ENCODE measurements at regions of chr20 and their contacts with region 1.

Region 1: GRCh38 chr20:38434743-38435554 is at the start of gene SNHG17:
- DNase-seq: peak; percentile 88
- H3K4me3 ChIP-seq: peak within 1 kb of the TSS; percentile 84 to 91
- H3K27ac ChIP-seq: peak within 1 kb of the TSS; percentile 84
- H3K4me1 ChIP-seq: peaks cover 7 to 20% of the 10 kb centered on the region in 2 experiments; a peak in 3 of 4 replicates
- H3K27me3 ChIP-seq: no peaks in the 10 kb centered on the region
- CTCF ChIP-seq: peak; percentile 99
- EP300 ChIP-seq: peak in 1 of 2 experiments; percentile 54; a peak in 1 of 4 replicates
- RAD21 ChIP-seq: peak; percentile 37; the same call in 1 of the 2 replicates
- polyA plus RNA-seq, gene SNHG17: 34.9 and 40.3 TPM in 2 replicates

Region 2: GRCh38 chr20:38094373-38094891 is 340.5 kb before region 1 on chr20:
- CTCF ChIA-PET with region 1: no interaction called
- POLR2A ChIA-PET with region 1: no interaction called
- DNase-seq: no peak
- H3K4me3 ChIP-seq: no peak overlapping the region
- H3K27ac ChIP-seq: peak overlapping the region; percentile 69 to 75
- H3K4me1 ChIP-seq: peaks cover 16 to 38% of the 10 kb centered on the region in 2 experiments
- H3K27me3 ChIP-seq: no peaks in the 10 kb centered on the region
- CTCF ChIP-seq: no peak
- EP300 ChIP-seq: peak in 1 of 2 experiments; percentile 27; a peak in 1 of 4 replicates
- RAD21 ChIP-seq: no peak

Region 3: DNA sequence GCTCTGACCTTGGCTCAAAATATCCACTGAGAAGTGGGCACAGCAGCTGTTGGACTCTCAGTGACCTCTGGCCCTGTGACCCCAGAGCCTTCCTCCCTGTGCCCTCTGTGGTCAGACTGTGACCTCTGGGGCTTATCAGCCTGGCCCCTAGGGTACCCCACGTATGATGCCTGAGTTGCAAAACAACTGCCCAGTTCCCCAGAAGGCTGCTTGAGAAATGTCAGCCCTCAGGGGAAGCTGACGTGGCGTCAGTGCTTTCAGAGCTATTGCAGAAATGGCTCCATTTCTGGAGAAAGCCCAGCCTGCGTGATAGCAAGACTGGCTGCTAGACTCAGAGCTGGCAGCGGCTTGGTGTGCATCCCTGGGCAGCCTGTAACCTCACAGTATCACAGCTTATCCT is 238.4 kb before region 1 on chr20:
- CTCF ChIA-PET with region 1: no interaction called
- POLR2A ChIA-PET with region 1: no interaction called
- DNase-seq: no peak
- H3K4me3 ChIP-seq: no peak overlapping the region
- H3K27ac ChIP-seq: no peak overlapping the region
- H3K4me1 ChIP-seq: peaks cover 0 to 6% of the 10 kb centered on the region in 2 experiments; a peak in 1 of 4 replicates
- H3K27me3 ChIP-seq: no peaks in the 10 kb centered on the region
- CTCF ChIP-seq: no peak
- EP300 ChIP-seq: no peak
- RAD21 ChIP-seq: no peak

Region 4: GRCh38 chr20:38260378-38261053 is 174.4 kb before region 1 on chr20 and contains the start of gene KIAA1755:
- CTCF ChIA-PET with region 1: no interaction called
- POLR2A ChIA-PET with region 1: no interaction called
- DNase-seq: peak; percentile 83
- H3K4me3 ChIP-seq: peak within 1 kb of the TSS; percentile 37 to 57
- H3K27ac ChIP-seq: peak within 1 kb of the TSS in 1 of 2 experiments; percentile 53; a peak in 2 of 4 replicates
- H3K4me1 ChIP-seq: peaks cover 0 to 7% of the 10 kb centered on the region in 2 experiments; a peak in 1 of 4 replicates
- H3K27me3 ChIP-seq: no peaks in the 10 kb centered on the region
- CTCF ChIP-seq: no peak
- EP300 ChIP-seq: no peak
- RAD21 ChIP-seq: no peak
- polyA plus RNA-seq, gene KIAA1755: 0.44 and 0.54 TPM in 2 replicates

Region 5: GRCh38 chr20:38418509-38419204 is 16.3 kb before region 1 on chr20:
- CTCF ChIA-PET with region 1: interaction called, 31 read pairs
- POLR2A ChIA-PET with region 1: interaction called, 7 read pairs
- DNase-seq: no peak
- H3K4me3 ChIP-seq: no peak overlapping the region
- H3K27ac ChIP-seq: peak overlapping the region in 1 of 2 experiments; percentile 12; a peak in 2 of 4 replicates
- H3K4me1 ChIP-seq: peaks cover 0 to 6% of the 10 kb centered on the region in 2 experiments; a peak in 1 of 4 replicates
- H3K27me3 ChIP-seq: no peaks in the 10 kb centered on the region
- CTCF ChIP-seq: no peak
- EP300 ChIP-seq: no peak
- RAD21 ChIP-seq: no peak

Region 6: GRCh38 chr20:38446441-38447209 is 11.7 kb after region 1 on chr20:
- CTCF ChIA-PET with region 1: interaction called, 75 read pairs
- POLR2A ChIA-PET with region 1: interaction called, 83 read pairs
- DNase-seq: peak; percentile 94
- H3K4me3 ChIP-seq: peak overlapping the region; percentile 87 to 88
- H3K27ac ChIP-seq: peak overlapping the region; percentile 68 to 79
- H3K4me1 ChIP-seq: peaks cover 10 to 13% of the 10 kb centered on the region in 2 experiments; a peak in 1 of 4 replicates
- H3K27me3 ChIP-seq: no peaks in the 10 kb centered on the region
- CTCF ChIP-seq: peak; percentile 90
- EP300 ChIP-seq: peak in 1 of 2 experiments; percentile 34; a peak in 1 of 4 replicates
- RAD21 ChIP-seq: peak; percentile 53

Region 7: DNA sequence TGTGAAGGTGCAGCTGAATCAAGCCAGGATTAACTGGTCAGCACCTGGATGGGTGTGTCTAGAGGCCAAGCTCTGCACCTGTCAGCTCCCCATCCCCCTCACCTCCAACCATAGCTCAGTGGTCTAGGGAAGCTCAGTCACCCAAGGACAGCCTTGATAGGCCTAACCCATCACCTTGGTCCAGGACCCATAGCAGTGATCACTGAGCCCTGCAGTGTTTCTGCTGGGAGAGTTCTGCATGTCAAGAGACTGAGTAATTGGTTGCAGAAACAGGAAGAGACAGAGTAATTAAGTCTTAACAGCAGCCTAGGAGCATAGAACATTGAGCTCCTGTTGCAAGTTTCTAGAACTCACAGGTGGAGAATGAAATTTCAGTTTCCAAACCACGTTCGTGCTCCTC is 19.0 kb after region 1 on chr20:
- CTCF ChIA-PET with region 1: interaction called, 75 read pairs
- POLR2A ChIA-PET with region 1: interaction called, 83 read pairs
- DNase-seq: no peak
- H3K4me3 ChIP-seq: no peak overlapping the region
- H3K27ac ChIP-seq: no peak overlapping the region
- H3K4me1 ChIP-seq: peaks cover 0 to 8% of the 10 kb centered on the region in 2 experiments; a peak in 1 of 4 replicates
- H3K27me3 ChIP-seq: no peaks in the 10 kb centered on the region
- CTCF ChIP-seq: no peak
- EP300 ChIP-seq: no peak
- RAD21 ChIP-seq: no peak